Dendritic cell treated with granulocyte-macrophage colony-stimulating factor and Interleukin-4, amounts not matched to agents 40 ng/mL and 50 ng/mL, for 4 days (primary cell): ENCODE measurements at regions of chr13 and their contacts with region 1.

Region 1: GRCh38 chr13:75482070-75482819 is at the start of gene TBC1D4:
- H3K4me3 Mint-ChIP-seq: peak within 1 kb of the TSS; percentile 84
- H3K27ac Mint-ChIP-seq: peak within 1 kb of the TSS; percentile 90
- H3K4me1 Mint-ChIP-seq: peaks cover 34% of the 10 kb centered on the region
- H3K27me3 Mint-ChIP-seq: peaks cover 55% of the 10 kb centered on the region

Region 2: GRCh38 chr13:75372517-75372916 is 109.7 kb before region 1 on chr13:
- intact Hi-C with region 1: loop called (anchors 5 kb)
- H3K4me3 Mint-ChIP-seq: no peak overlapping the region
- H3K27ac Mint-ChIP-seq: no peak overlapping the region
- H3K4me1 Mint-ChIP-seq: no peaks in the 10 kb centered on the region
- H3K27me3 Mint-ChIP-seq: no peaks in the 10 kb centered on the region

Region 3: GRCh38 chr13:75507027-75508001 is 25.1 kb after region 1 on chr13:
- intact Hi-C with region 1: loop called (anchors 1 kb)
- H3K4me3 Mint-ChIP-seq: no peak overlapping the region
- H3K27ac Mint-ChIP-seq: peak overlapping the region; percentile 31
- H3K4me1 Mint-ChIP-seq: peaks cover 41% of the 10 kb centered on the region
- H3K27me3 Mint-ChIP-seq: peaks cover 5% of the 10 kb centered on the region

Region 4: GRCh38 chr13:75635828-75636435 is 153.7 kb after region 1 on chr13 and contains the start of gene LMO7:
- intact Hi-C with region 1: loop called (anchors 10 kb)
- H3K4me3 Mint-ChIP-seq: peak within 1 kb of the TSS; percentile 77
- H3K27ac Mint-ChIP-seq: peak within 1 kb of the TSS; percentile 37
- H3K4me1 Mint-ChIP-seq: peaks cover 15% of the 10 kb centered on the region
- H3K27me3 Mint-ChIP-seq: peaks cover 50% of the 10 kb centered on the region